T-cell (primary cell): ENCODE measurements at regions of chr14 and their contacts with region 1.

Region 1: DNA sequence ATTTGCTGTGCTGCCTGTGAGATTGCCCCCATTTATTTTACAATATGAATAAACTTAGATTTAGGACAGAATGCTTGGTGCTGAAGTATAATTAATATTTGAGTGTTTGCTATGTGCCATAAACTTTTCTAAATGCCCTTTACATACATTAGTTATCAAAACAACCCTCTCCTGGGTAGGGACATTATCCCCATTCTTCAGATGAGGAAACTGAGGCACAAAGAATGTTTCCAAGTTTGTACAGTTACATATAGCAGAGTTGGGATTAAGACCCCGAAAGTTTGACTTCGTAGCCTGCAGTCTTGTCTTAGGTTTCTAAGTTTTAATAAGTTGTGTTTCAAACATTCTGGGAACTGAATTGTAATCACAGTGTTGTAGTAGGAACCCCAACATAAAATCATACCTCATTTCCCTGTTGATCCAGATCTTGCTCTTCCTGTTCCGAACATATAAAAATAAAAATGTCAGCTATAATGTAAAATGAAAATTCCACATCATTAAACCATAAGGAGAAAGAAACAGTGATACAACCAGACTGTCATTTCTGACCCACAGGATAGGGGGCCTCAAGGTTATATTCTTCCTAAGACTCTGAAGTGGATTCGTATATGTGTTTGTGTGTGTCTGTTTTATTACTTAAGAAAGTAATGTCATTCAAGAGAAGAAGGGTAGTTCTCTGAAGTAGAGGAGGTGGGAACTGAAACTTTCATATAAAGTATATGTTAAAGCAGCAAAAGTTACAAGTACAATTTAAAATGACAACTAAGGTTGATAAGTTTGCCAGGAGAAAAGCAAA is 18.6 kb downstream of the KLHDC2 start:
- DNase-seq: no peak
- ATAC-seq: no peak
- H3K4me3 ChIP-seq: no peak overlapping the region
- H3K4me3 Mint-ChIP-seq: no peak overlapping the region
- H3K27ac ChIP-seq: no peak overlapping the region
- H3K27ac Mint-ChIP-seq: peak overlapping the region in 1 of 2 donors; percentile 2
- H3K4me1 ChIP-seq: no peaks in the 10 kb centered on the region
- H3K4me1 Mint-ChIP-seq: peaks cover 0 to 6% (median 2%) of the 10 kb centered on the region in 3 donors
- H3K27me3 ChIP-seq: no peaks in the 10 kb centered on the region
- H3K27me3 Mint-ChIP-seq: no peaks in the 10 kb centered on the region

Region 2: GRCh38 chr14:50148799-50149198 is 362.3 kb after region 1 on chr14:
- CTCF ChIA-PET with region 1: no interaction called
- POLR2A ChIA-PET with region 1: interaction called in 1 of 2 experiments, 10 read pairs
- DNase-seq: no peak
- ATAC-seq: no peak
- H3K4me3 ChIP-seq: no peak overlapping the region
- H3K4me3 Mint-ChIP-seq: no peak overlapping the region
- H3K27ac ChIP-seq: no peak overlapping the region
- H3K27ac Mint-ChIP-seq: no peak overlapping the region
- H3K4me1 ChIP-seq: no peaks in the 10 kb centered on the region
- H3K4me1 Mint-ChIP-seq: no peaks in the 10 kb centered on the region
- H3K27me3 ChIP-seq: no peaks in the 10 kb centered on the region
- H3K27me3 Mint-ChIP-seq: no peaks in the 10 kb centered on the region